ENCODE measurements at regions of chr4 and their contacts with region 1.

Region 1: GRCh38 chr4:102620697-102621497 is 119.7 kb downstream of the NFKB1 start:
- DNase-seq: no peak
- H3K4me3 ChIP-seq: no peak overlapping the region
- CTCF ChIP-seq: no peak
- POLR2A ChIP-seq: no peak

Region 2: GRCh38 chr4:102362922-102363432 is 257.9 kb before region 1 on chr4:
- intact Hi-C with region 1: no loop called
- DNase-seq: no peak
- H3K4me3 ChIP-seq: no peak overlapping the region
- CTCF ChIP-seq: no peak
- POLR2A ChIP-seq: no peak

Region 3: DNA sequence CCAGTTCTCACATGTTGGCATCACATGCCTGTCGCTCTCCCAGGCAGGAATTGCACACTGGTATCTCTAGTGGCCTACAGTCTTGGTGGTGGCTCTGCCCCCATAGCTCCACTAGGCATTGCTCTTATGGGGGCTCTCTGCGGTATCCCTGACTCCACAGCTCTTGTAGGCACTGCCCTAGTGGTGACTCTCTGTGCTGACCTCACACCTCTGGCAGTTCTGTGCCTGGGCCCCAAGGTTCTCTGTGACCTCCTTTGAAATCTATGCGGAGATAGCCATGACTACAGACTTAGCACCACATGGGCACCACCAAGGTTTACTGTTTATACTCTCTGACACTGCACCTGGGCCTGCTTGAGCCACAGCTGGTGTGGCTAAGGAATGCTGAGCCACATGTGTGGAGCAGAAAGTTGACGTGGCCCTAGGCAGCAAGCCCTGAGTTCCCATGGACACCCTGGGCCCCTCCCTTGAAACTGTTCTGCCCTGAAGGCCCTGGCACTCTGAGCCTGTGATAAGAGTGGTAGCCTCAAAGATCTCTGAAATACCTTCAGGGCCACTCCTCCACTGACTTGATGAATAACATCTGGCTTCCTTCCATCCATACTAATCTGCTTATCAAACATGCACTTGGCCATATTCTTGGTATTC is 390.6 kb after region 1 on chr4:
- intact Hi-C with region 1: loop called (anchors 5 kb)
- DNase-seq: peak in 1 of 2 donors; percentile 82
- H3K4me3 ChIP-seq: no peak overlapping the region
- CTCF ChIP-seq: no peak
- POLR2A ChIP-seq: no peak

Measured in lower leg skin (tissue), 4 donors.